HEK293T (cell line): ENCODE measurements at regions of chr21 and their contacts with region 1.

Region 1: DNA sequence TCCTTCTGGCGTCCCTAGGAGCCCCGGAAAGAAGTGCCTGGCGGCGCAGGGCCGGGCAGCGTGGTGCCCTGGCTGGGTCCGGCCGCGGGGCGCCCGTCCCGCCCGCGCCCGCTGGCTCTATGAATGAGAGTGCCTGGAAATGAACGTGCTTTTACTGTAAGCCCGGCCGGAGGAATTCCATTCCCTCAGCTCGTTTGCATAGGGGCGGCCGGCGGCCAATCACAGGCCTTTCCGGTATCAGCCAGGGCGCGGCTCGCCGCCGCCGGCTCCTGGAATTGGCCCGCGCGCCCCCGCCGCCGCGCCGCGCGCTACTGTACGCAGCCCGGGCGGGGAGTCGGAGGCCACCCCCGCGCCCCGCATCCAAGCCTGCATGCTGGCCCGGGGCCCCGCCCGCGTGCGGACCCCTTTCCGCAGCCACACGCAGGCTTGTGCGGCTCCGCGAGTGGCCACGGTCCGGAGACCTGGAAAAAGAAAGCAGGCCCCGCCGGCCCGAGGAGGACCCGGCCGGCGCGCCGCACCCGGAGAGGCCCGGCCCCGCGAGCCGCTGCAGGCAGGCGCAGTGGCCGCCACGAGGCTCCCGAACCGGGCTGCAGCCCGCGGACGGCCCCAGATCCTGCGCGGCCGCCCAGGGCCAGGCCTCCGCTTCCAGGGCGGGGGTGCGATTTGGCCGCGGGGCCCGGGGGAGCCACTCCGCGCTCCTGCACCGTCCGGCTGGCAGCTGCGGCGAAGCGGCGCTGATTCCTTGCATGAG is 160.4 kb downstream of the RUNX1 start:
- DNase-seq: peak; percentile 87

Region 2: GRCh38 chr21:34745557-34746255 is 143.0 kb before region 1 on chr21:
- CTCF ChIA-PET with region 1: interaction called, 12 read pairs
- POLR2A ChIA-PET with region 1: interaction called, 6 read pairs
- DNase-seq: peak; percentile 87

Region 3: DNA sequence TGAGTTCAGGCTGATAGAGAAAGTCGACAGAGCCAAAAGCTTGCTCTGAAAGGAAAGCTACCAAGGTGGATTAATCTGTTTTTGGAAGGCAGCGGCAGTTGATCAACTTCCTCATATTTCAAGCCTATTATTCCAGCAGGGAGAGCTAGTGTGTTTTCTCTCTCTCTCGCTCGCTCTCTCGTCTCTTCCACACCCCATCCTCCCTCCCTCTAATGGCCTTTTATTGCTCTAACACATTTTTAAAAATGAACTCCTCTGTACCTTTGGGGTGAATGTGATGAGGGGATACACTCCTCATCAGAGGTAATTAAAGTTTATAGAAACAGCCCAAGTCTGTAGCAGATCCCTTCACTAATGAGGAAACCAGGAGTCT is 93.6 kb before region 1 on chr21:
- CTCF ChIA-PET with region 1: interaction called, 5 read pairs
- POLR2A ChIA-PET with region 1: interaction called, 22 read pairs
- DNase-seq: no peak

Region 4: GRCh38 chr21:34812504-34813265 is 76.1 kb before region 1 on chr21:
- CTCF ChIA-PET with region 1: no interaction called
- POLR2A ChIA-PET with region 1: interaction called, 12 read pairs
- DNase-seq: peak; percentile 31